ENCODE measurements at regions of chr2 and their contacts with region 1.

Region 1: DNA sequence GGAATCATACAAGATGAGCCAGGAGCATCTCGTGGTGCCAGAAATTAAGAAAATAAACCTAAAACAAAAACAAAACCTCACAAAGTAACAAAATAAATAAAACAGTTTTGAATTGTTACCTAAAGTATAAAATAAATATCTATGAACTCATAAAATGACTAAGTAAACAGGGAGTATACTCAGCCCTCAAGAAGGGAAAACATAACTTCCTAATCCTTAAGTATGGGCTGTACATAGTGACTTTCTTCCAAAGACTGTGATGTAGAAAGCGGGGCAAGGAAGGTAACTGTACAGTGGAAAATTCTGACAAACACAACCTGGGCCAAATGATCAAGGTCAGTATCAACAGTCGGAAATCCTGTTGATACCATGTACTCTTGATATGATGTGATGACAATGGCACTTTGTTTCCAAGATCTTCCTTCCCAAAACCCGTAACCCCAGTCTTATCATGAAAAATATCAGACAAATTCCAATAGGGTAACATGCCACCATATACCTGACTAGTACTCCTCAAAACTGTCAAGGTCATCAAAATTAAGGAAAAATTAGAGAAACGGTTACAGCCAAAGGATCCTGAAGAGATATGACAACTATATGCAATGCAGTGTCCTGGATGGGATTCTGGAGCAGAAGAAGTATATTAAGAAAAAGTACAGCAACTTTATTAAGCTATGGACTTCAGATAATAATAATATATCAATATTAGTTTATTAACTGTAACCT is 76.0 kb upstream of the XIRP2 start:
- DNase-seq: no peak
- H3K4me3 Mint-ChIP-seq: no peak overlapping the region
- H3K27ac Mint-ChIP-seq: no peak overlapping the region
- H3K4me1 Mint-ChIP-seq: no peaks in the 10 kb centered on the region
- H3K27me3 Mint-ChIP-seq: no peaks in the 10 kb centered on the region

Region 2: GRCh38 chr2:166784296-166784946 is 27.9 kb before region 1 on chr2:
- CTCF ChIA-PET with region 1: no interaction called
- intact Hi-C with region 1: loop called (anchors 5 kb)
- DNase-seq: no peak
- H3K4me3 Mint-ChIP-seq: no peak overlapping the region
- H3K27ac Mint-ChIP-seq: no peak overlapping the region
- H3K4me1 Mint-ChIP-seq: peaks cover 2% of the 10 kb centered on the region
- H3K27me3 Mint-ChIP-seq: no peaks in the 10 kb centered on the region

Measured in activated naive CD4-positive, alpha-beta T cell treated with anti-CD3 and anti-CD28 coated beads for 36 hours (primary cell).